Ascending aorta (tissue), 2 donors: ENCODE measurements at regions of chr5 and their contacts with region 1.

Region 1: GRCh38 chr5:88883059-88883835 is at the start of gene MEF2C:
- DNase-seq: peak; percentile 43 to 88
- H3K4me3 ChIP-seq: peak within 1 kb of the TSS; percentile 75 to 83
- H3K27ac ChIP-seq: peak within 1 kb of the TSS; percentile 90 to 95
- H3K4me1 ChIP-seq: no peaks in the 10 kb centered on the region
- H3K27me3 ChIP-seq: no peaks in the 10 kb centered on the region
- CTCF ChIP-seq: no peak
- total RNA-seq, gene MEF2C: 138 TPM

Region 2: GRCh38 chr5:88140856-88141752 is 742.1 kb before region 1 on chr5:
- intact Hi-C with region 1: loop called (anchors 5 kb)
- DNase-seq: peak; percentile 91 to 99
- H3K4me3 ChIP-seq: peak overlapping the region; percentile 51 to 63
- H3K27ac ChIP-seq: peak overlapping the region in 1 of 2 donors; percentile 63
- H3K4me1 ChIP-seq: no peaks in the 10 kb centered on the region
- H3K27me3 ChIP-seq: no peaks in the 10 kb centered on the region
- CTCF ChIP-seq: peak; percentile 51 to 85 (median 83)

Region 3: DNA sequence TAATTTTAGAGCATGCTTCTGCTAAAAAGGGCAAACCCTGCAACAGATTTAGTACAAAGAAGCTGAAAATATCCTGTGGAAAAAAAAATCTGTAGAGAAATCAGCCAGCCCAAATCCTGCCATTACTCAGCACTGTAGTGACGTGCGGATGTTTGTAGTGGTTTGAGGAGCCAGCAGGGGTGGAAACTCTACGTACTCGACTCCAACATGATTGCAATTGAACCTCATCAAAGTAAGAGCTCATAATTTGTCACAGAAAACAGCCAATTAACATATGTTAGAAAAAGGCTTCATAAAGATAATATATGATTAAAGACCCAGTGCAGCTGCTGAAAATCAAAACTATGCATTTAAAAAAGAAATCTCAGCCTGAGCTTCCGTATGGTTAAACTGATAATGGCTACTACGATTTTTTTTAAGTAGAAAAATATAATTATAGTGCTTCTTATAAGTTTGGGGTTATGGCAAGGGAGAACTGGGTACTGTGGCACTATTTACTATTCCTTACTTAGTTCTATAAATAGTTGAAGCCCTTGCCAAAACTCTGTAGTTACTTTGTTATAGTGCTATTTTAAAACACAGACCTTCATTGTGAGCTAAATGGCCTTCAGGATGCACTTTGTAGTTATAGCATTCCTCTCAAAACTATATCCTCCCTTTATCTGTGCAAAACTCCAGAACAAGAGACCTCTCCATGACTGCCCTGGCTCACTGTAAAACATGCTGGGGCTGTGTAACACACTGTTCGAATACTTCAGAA is 49.7 kb before region 1 on chr5:
- intact Hi-C with region 1: loop called (anchors 2 kb)
- DNase-seq: peak; percentile 29 to 89
- H3K4me3 ChIP-seq: peak overlapping the region; percentile 28 to 50
- H3K27ac ChIP-seq: peak overlapping the region; percentile 88 to 91
- H3K4me1 ChIP-seq: peaks cover 3 to 52% of the 10 kb centered on the region in 2 donors
- H3K27me3 ChIP-seq: no peaks in the 10 kb centered on the region
- CTCF ChIP-seq: no peak

Region 4: DNA sequence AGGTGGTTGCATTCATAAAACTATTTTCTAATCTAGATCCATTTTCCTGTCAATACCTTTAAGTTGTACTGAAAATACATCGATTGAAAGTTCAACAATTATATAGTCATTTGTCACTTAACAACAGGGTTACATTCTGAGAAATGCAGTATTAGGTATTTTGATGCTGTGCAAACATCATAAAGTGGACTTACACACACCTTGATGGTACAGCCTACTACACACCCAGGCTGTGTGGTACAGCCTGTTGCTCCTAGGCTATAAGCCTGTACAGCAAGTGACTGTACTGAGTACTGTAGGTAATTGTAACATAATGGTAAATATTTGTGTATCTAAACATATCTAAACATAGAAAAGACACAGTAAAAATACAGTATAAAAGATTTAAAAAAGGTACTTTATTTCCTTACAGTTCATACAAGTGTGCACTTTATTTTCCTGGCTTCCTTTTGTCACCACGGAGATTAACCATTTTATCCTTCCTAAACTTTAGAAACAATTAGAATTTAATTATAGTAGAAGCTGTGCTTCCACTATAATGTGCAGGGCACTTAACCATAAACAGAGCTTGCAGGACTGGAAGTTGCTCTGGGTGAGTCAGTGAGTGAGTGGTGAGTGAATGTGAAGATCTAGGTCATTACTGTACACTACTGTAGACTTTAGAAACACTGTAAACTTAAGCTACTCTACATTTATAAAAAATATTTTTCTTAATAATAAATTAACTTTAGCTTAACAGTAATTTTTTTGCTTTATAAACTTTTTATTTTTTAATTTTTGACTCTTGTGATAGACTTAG is 42.6 kb after region 1 on chr5:
- intact Hi-C with region 1: no loop called
- DNase-seq: no peak
- H3K4me3 ChIP-seq: no peak overlapping the region
- H3K27ac ChIP-seq: no peak overlapping the region
- H3K4me1 ChIP-seq: peaks cover 0 to 6% of the 10 kb centered on the region in 2 donors
- H3K27me3 ChIP-seq: no peaks in the 10 kb centered on the region
- CTCF ChIP-seq: no peak

Region 5: DNA sequence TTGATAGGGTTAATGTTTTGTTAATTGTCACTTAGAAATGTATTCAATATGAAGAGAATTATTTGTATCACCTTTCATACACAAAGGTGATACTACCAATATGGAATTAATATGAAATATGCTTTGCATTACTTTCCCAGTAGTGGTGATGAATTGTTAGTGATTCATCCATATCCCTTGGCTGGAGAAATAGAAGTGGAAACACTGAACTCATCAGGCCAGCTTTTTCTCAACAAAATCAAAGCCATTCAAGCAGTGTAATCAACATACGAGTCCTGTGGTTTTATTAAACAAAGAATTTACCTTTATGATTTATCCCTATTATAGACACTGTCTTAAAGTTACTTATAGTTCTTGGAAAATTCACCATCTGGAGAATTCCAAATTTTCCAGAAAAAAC is 263.8 kb after region 1 on chr5:
- intact Hi-C with region 1: no loop called
- DNase-seq: no peak
- H3K4me3 ChIP-seq: no peak overlapping the region
- H3K27ac ChIP-seq: no peak overlapping the region
- H3K4me1 ChIP-seq: no peaks in the 10 kb centered on the region
- H3K27me3 ChIP-seq: no peaks in the 10 kb centered on the region
- CTCF ChIP-seq: no peak

Region 6: DNA sequence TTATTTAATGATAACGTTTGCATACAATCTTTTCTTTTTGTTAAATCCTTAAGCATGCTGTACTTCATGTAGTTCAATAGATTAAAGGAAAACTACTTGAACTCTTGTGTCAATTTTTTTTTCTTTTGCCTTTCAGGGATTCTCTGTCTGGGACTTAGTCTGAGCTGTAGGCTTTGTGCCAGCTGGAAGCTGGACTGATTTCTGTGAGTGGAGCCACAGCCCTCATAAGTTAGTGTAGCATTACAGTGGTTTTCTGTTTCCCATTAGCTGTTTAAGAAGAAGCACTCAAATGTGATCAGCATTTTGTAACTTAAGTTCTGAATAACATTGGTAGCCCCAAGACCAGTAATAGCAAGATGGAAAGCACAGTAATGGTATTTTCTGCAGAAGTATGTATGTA is 330.3 kb after region 1 on chr5:
- intact Hi-C with region 1: loop called (anchors 5 kb)
- DNase-seq: no peak
- H3K4me3 ChIP-seq: no peak overlapping the region
- H3K27ac ChIP-seq: no peak overlapping the region
- H3K4me1 ChIP-seq: no peaks in the 10 kb centered on the region
- H3K27me3 ChIP-seq: no peaks in the 10 kb centered on the region
- CTCF ChIP-seq: no peak

Region 7: DNA sequence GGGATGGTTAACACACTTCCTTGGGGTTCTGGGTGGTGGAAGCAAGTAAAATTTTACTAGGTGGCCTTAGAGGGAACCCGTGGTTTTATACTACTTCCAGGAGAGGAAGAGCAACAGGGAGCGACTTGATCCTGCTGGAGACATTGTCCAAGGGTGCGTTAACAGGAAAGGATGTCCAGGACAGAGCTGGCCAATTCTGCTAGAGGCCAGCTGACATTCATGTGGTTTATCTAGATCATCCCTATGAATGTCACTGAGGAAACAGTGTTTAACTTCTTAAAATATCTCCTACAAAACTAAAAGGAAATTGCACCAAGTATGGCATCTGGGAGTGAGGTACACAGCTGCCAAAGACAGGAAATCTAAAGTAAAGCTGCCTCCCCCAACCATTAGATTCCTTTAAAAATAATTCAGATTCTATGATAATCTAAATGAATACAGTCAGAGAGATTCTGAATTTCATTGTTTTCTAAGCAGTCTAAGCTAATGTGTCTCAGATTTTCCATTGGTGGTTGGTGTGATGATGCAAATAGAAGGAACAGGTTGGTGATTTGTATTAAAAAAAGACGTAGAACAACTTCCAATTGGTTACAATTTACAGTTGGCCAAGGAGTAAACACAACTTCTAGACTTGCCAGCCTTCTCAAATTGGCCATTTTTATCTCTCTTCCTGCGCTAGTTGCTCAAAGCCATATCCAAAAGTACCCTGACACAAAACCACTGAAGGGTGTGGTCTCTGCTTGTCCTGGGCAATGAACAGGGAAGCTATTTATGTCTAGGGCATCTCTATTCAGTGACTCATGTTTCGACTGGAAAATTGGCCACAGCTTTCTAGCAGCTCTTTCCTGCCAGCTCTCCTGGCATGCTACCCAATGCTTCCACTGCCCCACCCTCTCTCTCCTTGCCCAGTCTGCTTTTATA is 574.4 kb after region 1 on chr5:
- intact Hi-C with region 1: loop called (anchors 10 kb)
- DNase-seq: peak; percentile 9 to 86
- H3K4me3 ChIP-seq: no peak overlapping the region
- H3K27ac ChIP-seq: peak overlapping the region; percentile 75 to 78
- H3K4me1 ChIP-seq: peaks cover 4 to 13% of the 10 kb centered on the region in 2 donors
- H3K27me3 ChIP-seq: no peaks in the 10 kb centered on the region
- CTCF ChIP-seq: no peak

Region 8: GRCh38 chr5:90409318-90410177 is 1526.3 kb after region 1 on chr5 and contains the start of gene CETN3:
- intact Hi-C with region 1: loop called (anchors 10 kb)
- DNase-seq: peak; percentile 80 to 95
- H3K4me3 ChIP-seq: peak within 1 kb of the TSS; percentile 89 to 97
- H3K27ac ChIP-seq: peak within 1 kb of the TSS; percentile 95 to 98
- H3K4me1 ChIP-seq: peaks cover 0 to 5% of the 10 kb centered on the region in 2 donors
- H3K27me3 ChIP-seq: no peaks in the 10 kb centered on the region
- CTCF ChIP-seq: no peak
- total RNA-seq, gene CETN3: 36.7 TPM